ENCODE measurements at regions of chr17 and their contacts with region 1.

Region 1: GRCh38 chr17:79839363-79840268 is at the start of gene CBX4:
- DNase-seq: peak; percentile 78 to 94 (median 88)
- ATAC-seq: peak; percentile 73 to 75
- H3K4me3 Mint-ChIP-seq: peak within 1 kb of the TSS; percentile 94 to 100 (median 97)
- H3K27ac Mint-ChIP-seq: peak within 1 kb of the TSS; percentile 95 to 99 (median 98)
- H3K4me1 Mint-ChIP-seq: peaks cover 19 to 63% (median 50%) of the 10 kb centered on the region in 4 donors
- H3K27me3 Mint-ChIP-seq: peaks cover 7 to 33% (median 13%) of the 10 kb centered on the region in 5 donors
- polyA plus RNA-seq, gene CBX4: 4.3 to 16.0 (median 9.3) TPM

Region 2: GRCh38 chr17:79796763-79797491 is 42.7 kb before region 1 on chr17 and contains the start of gene CBX8:
- POLR2A ChIA-PET with region 1: interaction called, 152 read pairs
- DNase-seq: peak; percentile 96 to 100 (median 98)
- ATAC-seq: peak; percentile 82 to 85
- H3K4me3 Mint-ChIP-seq: peak within 1 kb of the TSS; percentile 82 to 94 (median 88)
- H3K27ac Mint-ChIP-seq: peak within 1 kb of the TSS; percentile 53 to 97 (median 90)
- H3K4me1 Mint-ChIP-seq: peaks cover 13 to 47% (median 43%) of the 10 kb centered on the region in 4 donors
- H3K27me3 Mint-ChIP-seq: peaks cover 21 to 40% (median 30%) of the 10 kb centered on the region in 5 donors
- polyA plus RNA-seq, gene CBX8: 0.13 to 1.4 (median 0.77) TPM

Region 3: GRCh38 chr17:79803997-79804855 is 35.4 kb before region 1 on chr17:
- POLR2A ChIA-PET with region 1: interaction called, 152 read pairs
- DNase-seq: peak in 4 of 10 donors; percentile 28 to 45 (median 41)
- ATAC-seq: peak; percentile 46 to 54
- H3K4me3 Mint-ChIP-seq: peak overlapping the region; percentile 38 to 80 (median 72)
- H3K27ac Mint-ChIP-seq: peak overlapping the region in 4 of 10 donors; percentile 53 to 86 (median 72)
- H3K4me1 Mint-ChIP-seq: peaks cover 27 to 50% (median 44%) of the 10 kb centered on the region in 4 donors
- H3K27me3 Mint-ChIP-seq: peaks cover 60 to 89% (median 65%) of the 10 kb centered on the region in 5 donors

Region 4: DNA sequence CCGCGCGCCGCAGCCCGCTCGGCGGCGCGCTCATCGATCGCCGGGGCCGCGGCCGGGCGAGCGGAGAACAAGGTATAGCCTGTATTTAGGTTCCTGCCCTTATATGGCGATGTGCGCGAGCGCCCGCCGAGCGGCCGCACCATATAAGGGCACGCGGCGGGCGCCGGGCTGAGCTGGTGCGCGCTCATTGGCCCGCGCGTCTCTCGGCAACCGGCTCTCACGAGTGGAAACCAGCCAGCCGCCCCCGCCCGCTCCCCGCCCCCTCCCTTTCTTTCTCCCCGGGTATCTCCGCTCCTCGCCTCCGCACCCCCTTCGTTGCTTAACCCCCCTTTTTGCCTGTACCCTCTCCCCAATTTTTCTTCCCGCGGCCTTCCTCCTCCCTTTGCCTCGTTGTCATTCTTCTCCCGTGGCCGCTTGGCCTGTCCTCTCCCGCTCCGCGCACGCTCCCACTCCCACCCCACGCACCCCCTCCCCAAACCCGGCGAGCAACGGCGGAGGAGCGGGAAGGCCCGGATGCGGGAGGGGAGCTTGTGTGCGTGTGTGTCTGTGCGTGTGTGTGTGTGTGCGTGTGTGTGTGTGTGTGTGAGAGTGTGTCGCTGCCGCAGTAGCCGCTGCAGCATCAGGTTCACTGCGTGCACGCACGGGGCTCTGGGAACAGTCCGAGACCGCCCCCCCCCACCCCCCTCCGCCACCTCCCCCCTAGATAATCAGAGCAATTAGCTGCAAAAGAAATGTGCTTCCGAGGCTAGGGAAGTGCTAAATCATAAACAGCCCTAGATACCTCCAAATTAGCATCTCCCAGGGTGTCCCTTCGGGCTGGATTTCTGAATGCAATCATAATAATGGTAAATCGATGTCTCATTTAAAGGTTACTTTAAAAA is 29.2 kb before region 1 on chr17:
- POLR2A ChIA-PET with region 1: interaction called, 90 read pairs
- DNase-seq: peak; percentile 50 to 87 (median 70)
- ATAC-seq: peak; percentile 86 to 90
- H3K4me3 Mint-ChIP-seq: peak overlapping the region in 8 of 10 donors; percentile 27 to 66 (median 50)
- H3K27ac Mint-ChIP-seq: peak overlapping the region in 1 of 10 donors; percentile 69
- H3K4me1 Mint-ChIP-seq: peaks cover 19 to 44% (median 33%) of the 10 kb centered on the region in 4 donors
- H3K27me3 Mint-ChIP-seq: peaks cover 42 to 81% (median 51%) of the 10 kb centered on the region in 5 donors

Region 5: DNA sequence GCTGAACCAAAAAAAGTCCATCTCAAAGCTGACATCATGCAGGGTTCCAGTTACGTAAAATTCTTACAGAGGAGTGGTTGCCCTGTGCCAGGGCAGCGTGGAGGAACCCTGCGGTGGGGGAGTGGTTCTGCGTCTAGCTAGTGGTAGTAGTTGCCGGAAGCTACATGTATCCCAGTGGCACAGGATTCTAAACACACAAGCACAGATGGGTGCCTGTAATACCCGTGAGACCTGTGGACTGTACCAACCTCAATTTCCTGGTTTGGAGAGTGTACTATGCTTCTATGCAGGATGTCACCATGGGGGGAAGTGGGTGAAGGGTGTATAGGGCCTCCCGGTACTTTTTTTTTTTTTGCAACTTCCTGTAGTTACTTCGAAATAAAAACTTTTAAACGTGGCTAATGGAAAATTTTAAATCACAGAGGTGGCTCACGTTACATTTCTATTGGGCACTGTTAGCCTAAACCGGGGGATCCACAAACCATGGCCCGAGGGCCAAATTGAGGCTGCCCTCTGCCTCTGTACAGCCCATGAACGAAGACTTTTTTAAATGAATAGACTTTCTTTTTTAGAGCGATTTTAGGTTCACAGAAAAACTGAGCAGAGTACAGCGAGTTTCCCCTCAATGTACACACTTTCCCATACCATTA is 157.5 kb after region 1 on chr17:
- POLR2A ChIA-PET with region 1: interaction called, 27 read pairs
- DNase-seq: peak; percentile 52 to 94 (median 84)
- ATAC-seq: peak; percentile 93 to 96
- H3K4me3 Mint-ChIP-seq: peak overlapping the region; percentile 64 to 87 (median 82)
- H3K27ac Mint-ChIP-seq: peak overlapping the region; percentile 87 to 98 (median 96)
- H3K4me1 Mint-ChIP-seq: peaks cover 16 to 68% (median 53%) of the 10 kb centered on the region in 4 donors
- H3K27me3 Mint-ChIP-seq: no peaks in the 10 kb centered on the region